Testis (tissue), 5 donors: ENCODE measurements at regions of chr2 and their contacts with region 1.

Region 1: DNA sequence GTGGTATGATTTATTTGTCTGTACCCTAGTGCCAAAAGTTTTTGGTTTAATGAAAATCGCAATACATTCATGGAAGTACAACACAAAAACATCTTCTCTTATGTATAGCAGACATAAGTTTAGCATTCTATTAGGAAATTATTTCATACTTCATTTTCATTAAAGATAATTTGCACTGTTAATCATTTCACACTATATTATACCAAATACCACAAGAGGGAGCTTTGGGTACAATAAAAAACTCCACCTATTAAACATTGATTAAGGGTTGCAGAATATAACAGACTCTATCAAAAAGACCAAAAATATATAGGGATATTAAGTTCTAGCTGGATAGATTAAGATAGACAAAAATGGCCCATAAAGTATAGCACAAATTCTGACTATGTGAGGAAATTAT is 79.0 kb downstream of the SLC66A3 start:
- DNase-seq: no peak
- H3K4me3 ChIP-seq: no peak overlapping the region
- H3K27ac ChIP-seq: no peak overlapping the region
- H3K4me1 ChIP-seq: no peaks in the 10 kb centered on the region
- H3K27me3 ChIP-seq: no peaks in the 10 kb centered on the region
- CTCF ChIP-seq: peak; percentile 17 to 34 (median 33)
- POLR2A ChIP-seq: no peak

Region 2: GRCh38 chr2:11411768-11412448 is 177.6 kb after region 1 on chr2:
- intact Hi-C with region 1: loop called (anchors 10 kb)
- DNase-seq: peak; percentile 62
- H3K4me3 ChIP-seq: peak overlapping the region in 1 of 2 donors; percentile 12
- H3K27ac ChIP-seq: no peak overlapping the region
- H3K4me1 ChIP-seq: no peaks in the 10 kb centered on the region
- H3K27me3 ChIP-seq: no peaks in the 10 kb centered on the region
- CTCF ChIP-seq: peak; percentile 67 to 81 (median 75)
- POLR2A ChIP-seq: no peak